Activated CD4-positive, alpha-beta memory T cell treated with anti-CD3 and anti-CD28 coated beads for 36 hours (primary cell): ENCODE measurements at regions of chr5 and their contacts with region 1.

Region 1: DNA sequence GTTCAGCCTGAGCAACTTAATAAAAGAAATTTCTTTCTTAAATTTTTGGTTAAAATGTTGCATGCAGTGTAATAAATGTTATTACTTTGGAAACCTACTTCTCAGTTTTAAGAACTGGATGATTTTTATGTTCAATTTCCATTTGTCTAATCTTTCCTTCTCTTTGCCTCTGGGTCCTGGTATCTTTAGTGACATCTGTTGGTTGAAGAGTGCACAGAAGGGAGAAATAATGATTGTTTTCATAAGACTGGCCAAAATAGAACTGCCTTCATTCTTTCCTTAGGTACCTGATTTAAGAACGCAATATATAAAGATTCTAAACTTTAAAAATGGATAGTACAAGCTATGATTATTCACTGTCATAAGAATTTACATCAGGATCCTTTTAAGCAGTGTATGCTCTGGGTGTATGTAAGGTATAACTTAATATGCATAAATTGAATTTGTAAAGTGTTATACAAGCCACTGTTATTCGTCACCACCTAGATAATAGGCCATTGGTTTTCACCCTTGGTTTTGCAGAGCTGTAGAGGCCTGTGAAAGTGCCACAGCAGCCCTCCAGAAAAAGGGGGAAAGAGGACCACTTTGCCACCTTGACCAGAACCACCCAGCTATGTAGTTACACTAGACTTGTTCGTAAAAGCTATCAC is 82.8 kb upstream of the TLX3 start:
- DNase-seq: no peak
- H3K4me3 Mint-ChIP-seq: no peak overlapping the region
- H3K27ac Mint-ChIP-seq: no peak overlapping the region
- H3K4me1 Mint-ChIP-seq: no peaks in the 10 kb centered on the region
- H3K27me3 Mint-ChIP-seq: peaks cover 6% of the 10 kb centered on the region

Region 2: DNA sequence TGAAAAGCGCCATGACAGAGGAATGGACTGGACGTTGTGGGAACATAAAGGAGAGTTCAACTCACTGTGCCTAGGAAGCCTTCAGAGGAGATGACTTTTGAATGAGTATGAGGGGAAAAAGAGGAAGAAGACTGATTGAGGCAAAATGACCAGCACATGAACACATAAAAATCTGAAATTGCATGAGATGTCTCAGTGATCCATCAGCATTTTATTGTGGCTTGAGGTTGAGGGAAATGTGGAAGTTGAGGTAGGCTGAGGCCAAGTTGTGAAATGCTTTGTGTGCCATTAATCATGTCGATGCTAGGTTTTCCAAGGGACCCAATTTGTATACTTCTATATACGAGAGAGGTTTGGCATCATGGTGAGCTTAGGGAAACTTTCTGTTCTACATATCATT is 58.1 kb before region 1 on chr5:
- CTCF ChIA-PET with region 1: no interaction called
- POLR2A ChIA-PET with region 1: no interaction called
- intact Hi-C with region 1: no loop called
- DNase-seq: no peak
- H3K4me3 Mint-ChIP-seq: no peak overlapping the region
- H3K27ac Mint-ChIP-seq: no peak overlapping the region
- H3K4me1 Mint-ChIP-seq: no peaks in the 10 kb centered on the region
- H3K27me3 Mint-ChIP-seq: no peaks in the 10 kb centered on the region

Region 3: GRCh38 chr5:171258737-171259415 is 32.6 kb after region 1 on chr5:
- CTCF ChIA-PET with region 1: no interaction called
- POLR2A ChIA-PET with region 1: no interaction called
- intact Hi-C with region 1: loop called (anchors 2 kb)
- DNase-seq: no peak
- H3K4me3 Mint-ChIP-seq: no peak overlapping the region
- H3K27ac Mint-ChIP-seq: no peak overlapping the region
- H3K4me1 Mint-ChIP-seq: no peaks in the 10 kb centered on the region
- H3K27me3 Mint-ChIP-seq: no peaks in the 10 kb centered on the region